Endothelial cell of umbilical vein (primary cell): ENCODE measurements at regions of chr2 and their contacts with region 1.

Region 1: DNA sequence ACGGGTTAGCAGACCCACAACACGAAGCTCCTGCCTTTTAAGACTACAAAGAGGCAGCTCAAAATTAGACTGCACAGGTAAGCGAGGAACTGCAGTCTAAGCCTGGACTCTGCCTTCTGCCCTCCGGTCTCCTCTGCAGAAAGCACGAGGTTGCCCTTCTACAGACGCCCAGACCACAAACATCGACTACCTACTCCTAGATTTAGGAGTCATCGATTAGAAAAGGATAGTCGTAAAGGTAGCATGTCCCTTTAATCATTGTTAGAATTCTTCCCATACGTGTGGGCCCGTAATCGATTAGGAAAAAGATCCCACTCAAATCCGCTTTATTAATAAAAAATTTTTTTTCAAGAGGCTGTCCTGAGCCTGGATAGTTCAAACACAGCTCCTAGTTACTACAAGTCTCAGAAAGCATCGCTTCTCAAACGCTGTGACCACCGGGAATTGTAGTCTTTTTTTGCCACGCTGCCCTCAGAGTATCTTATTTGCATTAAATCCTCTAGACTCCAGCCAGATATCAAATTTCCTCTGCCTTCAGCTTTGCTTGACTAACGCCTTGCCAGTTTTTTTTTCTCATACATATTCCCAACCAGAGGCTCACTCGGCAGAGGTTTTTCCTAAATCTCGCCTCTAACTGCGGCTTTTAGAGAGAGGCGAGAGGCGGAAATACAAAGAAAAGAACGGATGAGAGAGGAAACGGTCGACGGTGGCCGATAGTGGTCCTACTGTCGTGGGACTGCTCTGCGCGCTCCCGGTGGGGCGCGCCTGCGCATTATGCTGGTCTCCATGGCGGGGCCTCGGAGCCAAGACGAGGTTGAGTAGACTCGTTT is at the starts of genes CARF and WDR12:
- DNase-seq: peak; percentile 96
- H3K4me3 ChIP-seq: peak within 1 kb of the TSS; percentile 84 to 97 (median 97)
- H3K27ac ChIP-seq: peak within 1 kb of the TSS; percentile 86
- H3K4me1 ChIP-seq: peaks cover 7% of the 10 kb centered on the region
- H3K27me3 ChIP-seq: no peaks in the 10 kb centered on the region
- CTCF ChIP-seq: no peak
- POLR2A ChIP-seq: peak; percentile 78
- total RNA-seq, gene CARF: 3.2 and 3.7 TPM in 2 replicates
- total RNA-seq, gene WDR12: 65.6 and 67.1 TPM in 2 replicates

Region 2: GRCh38 chr2:202982779-202983491 is 71.2 kb after region 1 on chr2:
- CTCF ChIA-PET with region 1: no interaction called
- POLR2A ChIA-PET with region 1: no interaction called
- dilution Hi-C with region 1: no loop called
- intact Hi-C with region 1: no loop called
- DNase-seq: no peak
- H3K4me3 ChIP-seq: no peak overlapping the region
- H3K27ac ChIP-seq: no peak overlapping the region
- H3K4me1 ChIP-seq: no peaks in the 10 kb centered on the region
- H3K27me3 ChIP-seq: no peaks in the 10 kb centered on the region
- CTCF ChIP-seq: no peak
- POLR2A ChIP-seq: no peak

Region 3: GRCh38 chr2:203105996-203106395 is 194.3 kb after region 1 on chr2:
- CTCF ChIA-PET with region 1: no interaction called
- POLR2A ChIA-PET with region 1: no interaction called
- dilution Hi-C with region 1: no loop called
- intact Hi-C with region 1: loop called (anchors 10 kb)
- DNase-seq: peak; percentile 81
- H3K4me3 ChIP-seq: no peak overlapping the region
- H3K27ac ChIP-seq: peak overlapping the region; percentile 37
- H3K4me1 ChIP-seq: peaks cover 16% of the 10 kb centered on the region
- H3K27me3 ChIP-seq: no peaks in the 10 kb centered on the region
- CTCF ChIP-seq: no peak
- POLR2A ChIP-seq: no peak